ENCODE measurements at regions of chr9 and their contacts with region 1.

Region 1: DNA sequence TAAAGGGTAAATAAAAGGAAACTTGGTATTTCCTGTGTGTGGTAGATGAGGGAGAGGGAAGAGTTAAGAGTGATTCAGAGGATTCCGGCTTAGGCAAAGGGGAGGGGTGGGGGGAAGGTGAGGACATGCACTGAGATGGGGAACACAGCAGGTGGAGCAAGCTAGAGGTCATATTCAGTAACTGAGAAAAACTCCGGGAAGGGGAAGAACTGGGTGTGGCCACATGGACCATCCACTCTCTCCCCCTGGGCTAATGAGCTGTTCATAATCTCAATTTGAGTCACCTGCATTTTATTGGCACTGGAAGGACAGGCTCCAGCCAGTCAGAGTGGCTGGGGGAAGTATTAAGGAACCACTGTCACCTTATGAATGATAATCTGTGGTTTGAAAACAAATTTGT is 45.0 kb upstream of the UGCG start:
- DNase-seq: peak; percentile 96
- H3K4me3 Mint-ChIP-seq: no peak overlapping the region
- H3K27ac Mint-ChIP-seq: peak overlapping the region; percentile 60
- H3K4me1 Mint-ChIP-seq: peaks cover 23% of the 10 kb centered on the region
- H3K27me3 Mint-ChIP-seq: no peaks in the 10 kb centered on the region
- CTCF ChIP-seq: no peak

Region 2: DNA sequence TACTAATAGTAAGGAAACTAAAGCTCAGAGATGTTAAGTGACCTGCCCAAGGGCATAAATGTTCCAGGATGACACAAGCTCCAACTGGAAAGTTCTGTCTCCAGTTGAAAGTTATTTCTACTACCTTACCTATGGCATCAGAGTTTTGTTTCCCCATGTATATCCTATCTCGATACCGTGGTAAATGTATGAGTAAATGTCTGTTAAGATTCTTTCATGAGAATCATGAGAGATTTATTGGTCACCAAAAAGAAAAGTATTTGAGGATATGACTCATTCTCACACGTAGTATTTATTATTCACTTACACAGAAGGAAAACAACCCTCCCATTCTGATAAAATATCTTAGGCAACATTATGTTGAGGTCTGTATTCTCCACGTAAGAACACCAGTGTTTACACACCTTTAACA is 45.7 kb before region 1 on chr9:
- CTCF ChIA-PET with region 1: interaction called, 3 read pairs
- POLR2A ChIA-PET with region 1: interaction called, 12 read pairs
- intact Hi-C with region 1: no loop called
- DNase-seq: peak; percentile 79
- H3K4me3 Mint-ChIP-seq: peak overlapping the region; percentile 38
- H3K27ac Mint-ChIP-seq: peak overlapping the region; percentile 99
- H3K4me1 Mint-ChIP-seq: peaks cover 22% of the 10 kb centered on the region
- H3K27me3 Mint-ChIP-seq: no peaks in the 10 kb centered on the region
- CTCF ChIP-seq: no peak

Region 3: GRCh38 chr9:111916234-111916645 is 64.7 kb after region 1 on chr9:
- CTCF ChIA-PET with region 1: no interaction called
- POLR2A ChIA-PET with region 1: no interaction called
- intact Hi-C with region 1: no loop called
- DNase-seq: no peak
- H3K4me3 Mint-ChIP-seq: no peak overlapping the region
- H3K27ac Mint-ChIP-seq: no peak overlapping the region
- H3K4me1 Mint-ChIP-seq: peaks cover 16% of the 10 kb centered on the region
- H3K27me3 Mint-ChIP-seq: no peaks in the 10 kb centered on the region
- CTCF ChIP-seq: no peak

Measured in MCF 10A (cell line).